ENCODE measurements at regions of chr19 and their contacts with region 1.

Region 1: GRCh38 chr19:52369559-52370340 is at the start of gene ZNF880:
- DNase-seq: peak; percentile 81 to 92 (median 88)
- ATAC-seq: peak; percentile 97
- H3K4me3 ChIP-seq: peak within 1 kb of the TSS; percentile 100
- H3K4me3 Mint-ChIP-seq: peak within 1 kb of the TSS; percentile 90 to 98 (median 94)
- H3K27ac ChIP-seq: peak within 1 kb of the TSS; percentile 92
- H3K27ac Mint-ChIP-seq: peak within 1 kb of the TSS; percentile 96 to 99 (median 98)
- H3K4me1 ChIP-seq: peaks cover 4 to 5% of the 10 kb centered on the region in 2 donors
- H3K4me1 Mint-ChIP-seq: peaks cover 2 to 19% (median 17%) of the 10 kb centered on the region in 7 donors
- H3K27me3 ChIP-seq: no peaks in the 10 kb centered on the region
- H3K27me3 Mint-ChIP-seq: no peaks in the 10 kb centered on the region
- total RNA-seq, gene ZNF880: 10.3 to 33.5 (median 25.4) TPM

Region 2: DNA sequence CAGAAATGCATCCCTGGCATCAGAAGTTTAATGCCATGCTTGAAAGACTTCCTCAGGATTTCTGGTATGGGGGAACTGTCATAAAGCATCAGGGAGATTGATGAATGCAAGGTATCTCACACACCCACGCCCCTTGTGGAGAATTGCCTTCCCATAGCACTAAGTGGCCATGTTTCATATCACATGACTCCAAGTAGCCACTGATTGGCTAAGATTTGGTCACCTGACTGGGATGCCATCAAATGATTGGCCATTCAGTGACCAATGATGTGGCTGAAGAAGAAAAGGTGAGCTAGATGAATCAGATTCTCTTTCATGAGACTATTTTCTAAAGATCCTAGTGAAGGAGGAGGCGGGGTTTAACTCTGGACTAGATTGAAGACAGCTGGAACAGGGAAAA is 1375.6 kb before region 1 on chr19:
- CTCF ChIA-PET with region 1: no interaction called
- POLR2A ChIA-PET with region 1: no interaction called
- intact Hi-C with region 1: no loop called
- DNase-seq: no peak
- ATAC-seq: no peak
- H3K4me3 ChIP-seq: no peak overlapping the region
- H3K4me3 Mint-ChIP-seq: no peak overlapping the region
- H3K27ac ChIP-seq: no peak overlapping the region
- H3K27ac Mint-ChIP-seq: no peak overlapping the region
- H3K4me1 ChIP-seq: no peaks in the 10 kb centered on the region
- H3K4me1 Mint-ChIP-seq: no peaks in the 10 kb centered on the region
- H3K27me3 ChIP-seq: no peaks in the 10 kb centered on the region
- H3K27me3 Mint-ChIP-seq: peaks cover 11 to 46% (median 37%) of the 10 kb centered on the region in 5 donors

Region 3: DNA sequence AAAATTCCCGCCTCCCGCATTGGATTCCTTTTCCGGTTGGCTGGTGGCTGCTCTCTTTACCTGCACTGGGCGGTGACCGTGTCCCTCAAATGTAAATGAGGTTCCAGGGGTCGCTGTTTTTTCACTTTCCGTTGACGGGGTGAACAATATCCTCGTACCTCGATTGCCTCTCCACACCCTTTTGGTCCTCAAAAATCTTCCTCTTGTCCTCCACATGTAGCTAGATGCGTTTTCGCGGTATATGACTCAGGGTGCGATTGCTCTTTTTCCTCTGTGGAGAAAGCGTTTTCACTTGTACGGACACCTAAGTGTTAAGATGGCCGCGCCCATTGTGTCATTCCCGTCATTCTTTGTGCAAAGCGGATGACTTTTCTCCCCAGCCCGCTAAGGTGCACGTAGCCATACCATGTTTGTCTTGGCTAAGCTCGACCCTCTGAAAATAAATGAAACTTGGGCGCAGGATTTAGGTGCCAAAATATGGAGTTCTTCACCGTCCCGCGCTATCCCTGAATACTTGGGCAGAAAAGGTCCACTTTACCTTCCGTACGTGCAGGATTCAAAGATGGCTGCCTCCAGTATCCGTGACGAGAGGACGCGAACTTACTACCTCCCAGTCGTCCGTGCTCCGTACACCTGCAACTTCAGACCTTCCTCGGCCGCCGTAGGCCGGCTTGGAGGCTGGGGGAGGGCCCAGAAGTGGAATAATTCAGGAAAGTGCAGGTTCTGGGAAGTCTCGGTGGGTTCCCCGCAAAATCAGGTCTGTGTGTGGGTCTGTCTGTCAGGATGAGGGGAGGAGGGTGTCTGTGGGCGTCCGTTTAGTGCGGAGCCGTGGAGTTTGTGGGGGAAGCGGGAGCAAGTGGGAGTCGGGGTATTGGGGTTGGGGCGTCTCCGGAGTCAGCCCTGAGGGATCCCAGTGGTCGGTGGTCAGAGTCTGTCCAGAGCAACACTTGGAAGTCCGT is 442.7 kb before region 1 on chr19 and contains the start of gene ZNF613:
- CTCF ChIA-PET with region 1: no interaction called
- POLR2A ChIA-PET with region 1: no interaction called
- intact Hi-C with region 1: loop called in 1 of 2 experiments (anchors 10 kb)
- DNase-seq: peak; percentile 65 to 87 (median 83)
- ATAC-seq: peak; percentile 92
- H3K4me3 ChIP-seq: peak within 1 kb of the TSS; percentile 70
- H3K4me3 Mint-ChIP-seq: peak within 1 kb of the TSS; percentile 90 to 100 (median 97)
- H3K27ac ChIP-seq: peak within 1 kb of the TSS; percentile 77
- H3K27ac Mint-ChIP-seq: peak within 1 kb of the TSS; percentile 87 to 96 (median 92)
- H3K4me1 ChIP-seq: peaks cover 4% of the 10 kb centered on the region in 2 donors
- H3K4me1 Mint-ChIP-seq: peaks cover 19 to 41% (median 36%) of the 10 kb centered on the region in 7 donors
- H3K27me3 ChIP-seq: no peaks in the 10 kb centered on the region
- H3K27me3 Mint-ChIP-seq: no peaks in the 10 kb centered on the region
- total RNA-seq, gene ZNF613: 1.5 to 9.6 (median 5.2) TPM

Region 4: DNA sequence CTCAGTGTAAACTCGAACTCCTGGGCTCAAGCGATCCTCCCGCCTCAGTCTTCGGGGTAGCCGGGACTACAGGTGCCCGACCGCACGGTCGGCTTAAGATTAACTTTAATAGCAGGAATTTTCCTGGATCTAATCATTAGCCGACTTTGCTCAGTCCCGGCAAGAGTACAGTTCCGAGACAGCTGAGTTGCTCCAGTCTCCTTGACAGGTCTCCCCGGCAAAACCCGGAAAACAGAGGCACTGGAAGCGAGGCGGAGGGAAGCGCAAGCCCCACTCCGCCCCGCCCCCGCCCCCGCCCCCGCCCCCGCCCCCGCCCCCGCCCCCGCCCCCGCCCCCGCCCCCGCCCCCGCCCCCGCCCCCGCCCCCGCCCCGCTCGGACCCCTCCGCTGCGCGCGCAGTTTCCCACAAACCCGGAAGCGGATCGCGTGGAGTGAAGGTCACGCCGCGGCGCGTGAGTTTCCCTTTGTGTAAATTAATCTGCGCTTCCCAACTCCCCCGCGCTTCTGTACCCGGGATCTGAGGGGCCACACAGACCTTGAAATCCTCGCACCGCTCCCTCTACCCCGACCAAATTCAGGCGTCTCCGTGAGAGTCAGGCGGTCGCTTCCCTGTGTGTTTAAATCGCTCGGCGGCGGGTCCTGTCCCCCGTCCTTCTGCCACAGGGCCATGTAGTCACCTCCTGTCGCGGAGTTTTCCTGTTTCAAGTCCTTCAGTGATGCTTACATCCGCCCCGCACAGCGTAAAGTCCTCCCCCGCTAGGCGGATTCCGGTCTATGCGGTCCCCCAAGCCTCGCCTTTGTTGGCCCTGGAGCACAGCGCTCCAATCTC is 72.8 kb before region 1 on chr19 and contains the start of gene ZNF480:
- CTCF ChIA-PET with region 1: no interaction called
- POLR2A ChIA-PET with region 1: no interaction called
- intact Hi-C with region 1: loop called in 1 of 2 experiments (anchors 1 kb)
- DNase-seq: peak; percentile 67 to 91 (median 87)
- ATAC-seq: peak; percentile 89
- H3K4me3 ChIP-seq: peak within 1 kb of the TSS; percentile 85
- H3K4me3 Mint-ChIP-seq: peak within 1 kb of the TSS; percentile 89 to 99 (median 98)
- H3K27ac ChIP-seq: peak within 1 kb of the TSS; percentile 97
- H3K27ac Mint-ChIP-seq: peak within 1 kb of the TSS; percentile 95 to 99 (median 98)
- H3K4me1 ChIP-seq: peaks cover 4 to 5% of the 10 kb centered on the region in 2 donors
- H3K4me1 Mint-ChIP-seq: peaks cover 15 to 32% (median 19%) of the 10 kb centered on the region in 7 donors
- H3K27me3 ChIP-seq: no peaks in the 10 kb centered on the region
- H3K27me3 Mint-ChIP-seq: peaks cover 0 to 3% (median 0%) of the 10 kb centered on the region in 5 donors
- total RNA-seq, gene ZNF480: 8.5 to 28.9 (median 13.3) TPM

Region 5: DNA sequence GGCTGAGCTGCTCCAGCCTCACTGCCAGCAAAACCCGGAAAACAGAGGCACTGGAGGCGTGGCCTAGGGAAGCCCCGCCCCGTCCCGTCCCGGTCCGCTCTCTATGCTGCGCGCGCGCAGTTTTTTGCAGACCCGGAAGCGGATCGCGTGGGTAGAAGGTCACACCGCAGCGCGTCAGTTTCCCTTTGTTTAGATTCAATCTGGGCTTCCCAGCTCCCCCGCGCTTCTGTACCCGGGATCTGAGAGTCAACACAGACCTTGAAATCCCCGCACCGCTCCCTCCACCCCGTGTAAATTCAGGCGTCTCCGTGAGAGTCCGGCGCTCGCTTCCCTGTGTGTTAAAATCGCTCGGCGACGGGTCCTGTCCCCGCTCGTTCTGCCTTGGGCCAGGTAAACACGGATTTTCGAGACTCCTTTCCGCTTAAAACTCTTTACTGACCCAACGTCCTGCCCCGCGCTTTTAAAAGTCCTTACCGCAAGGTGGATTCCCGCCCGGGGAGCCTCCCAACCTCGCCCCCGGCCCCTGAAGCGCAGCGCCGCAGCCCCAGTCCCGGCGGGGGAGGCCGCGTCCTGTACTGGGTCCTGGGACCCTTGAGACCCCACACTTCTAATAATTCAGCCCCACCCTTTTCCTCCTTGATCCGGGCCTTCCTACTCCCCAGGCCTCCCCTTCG is 33.5 kb before region 1 on chr19 and contains the start of gene ZNF610:
- CTCF ChIA-PET with region 1: no interaction called
- POLR2A ChIA-PET with region 1: interaction called, 4 read pairs
- intact Hi-C with region 1: loop called (anchors 1 kb)
- DNase-seq: peak; percentile 73 to 88 (median 85)
- ATAC-seq: peak; percentile 99
- H3K4me3 ChIP-seq: peak within 1 kb of the TSS; percentile 88
- H3K4me3 Mint-ChIP-seq: peak within 1 kb of the TSS; percentile 87 to 97 (median 93)
- H3K27ac ChIP-seq: peak within 1 kb of the TSS; percentile 83
- H3K27ac Mint-ChIP-seq: peak within 1 kb of the TSS; percentile 81 to 98 (median 96)
- H3K4me1 ChIP-seq: peaks cover 0 to 6% of the 10 kb centered on the region in 2 donors
- H3K4me1 Mint-ChIP-seq: peaks cover 11 to 19% (median 16%) of the 10 kb centered on the region in 7 donors
- H3K27me3 ChIP-seq: no peaks in the 10 kb centered on the region
- H3K27me3 Mint-ChIP-seq: no peaks in the 10 kb centered on the region
- total RNA-seq, gene ZNF610: 0.42 to 4.3 (median 0.93) TPM

Region 6: DNA sequence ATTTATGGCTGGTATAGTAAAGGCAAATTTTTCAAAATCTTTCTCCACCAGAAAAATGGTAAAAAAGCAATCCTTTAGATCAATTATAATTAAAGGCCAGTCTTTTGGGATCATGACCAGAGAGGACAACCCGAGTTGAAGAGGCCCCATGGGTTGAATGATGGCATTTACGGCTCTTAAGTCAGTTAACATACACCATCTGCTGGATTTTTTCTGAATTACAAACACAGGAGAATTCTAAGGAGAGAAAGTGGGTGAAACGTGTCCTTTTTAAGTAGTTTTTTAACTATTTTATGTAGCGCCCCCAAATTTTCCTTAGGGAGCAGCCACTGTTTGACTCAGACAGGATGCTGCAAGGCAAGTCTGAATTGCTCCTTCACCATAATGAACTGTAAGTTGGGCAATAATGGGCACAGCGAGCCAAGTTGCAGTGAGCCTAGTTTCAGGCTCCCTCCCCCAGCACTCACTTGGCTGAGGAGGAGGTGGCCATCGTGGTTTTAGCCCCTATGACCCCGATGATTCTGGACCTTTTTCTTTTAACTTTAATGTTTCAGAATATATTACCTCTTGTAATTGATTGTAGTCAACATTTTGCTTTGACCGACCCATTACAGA is 378.7 kb after region 1 on chr19:
- CTCF ChIA-PET with region 1: no interaction called
- POLR2A ChIA-PET with region 1: no interaction called
- intact Hi-C with region 1: loop called in 1 of 2 experiments (anchors 1 kb)
- DNase-seq: peak in 7 of 9 donors; percentile 18 to 43 (median 35)
- ATAC-seq: no peak
- H3K4me3 ChIP-seq: no peak overlapping the region
- H3K4me3 Mint-ChIP-seq: no peak overlapping the region
- H3K27ac ChIP-seq: no peak overlapping the region
- H3K27ac Mint-ChIP-seq: no peak overlapping the region
- H3K4me1 ChIP-seq: no peaks in the 10 kb centered on the region
- H3K4me1 Mint-ChIP-seq: peaks cover 0 to 13% (median 6%) of the 10 kb centered on the region in 7 donors
- H3K27me3 ChIP-seq: no peaks in the 10 kb centered on the region
- H3K27me3 Mint-ChIP-seq: no peaks in the 10 kb centered on the region

Measured in naive thymus-derived CD4-positive, alpha-beta T cell (primary cell).